Activated CD4-positive, alpha-beta T cell treated with anti-CD3 and anti-CD28 coated beads for 36 hours (primary cell): ENCODE measurements at regions of chr7 and their contacts with region 1.

Region 1: DNA sequence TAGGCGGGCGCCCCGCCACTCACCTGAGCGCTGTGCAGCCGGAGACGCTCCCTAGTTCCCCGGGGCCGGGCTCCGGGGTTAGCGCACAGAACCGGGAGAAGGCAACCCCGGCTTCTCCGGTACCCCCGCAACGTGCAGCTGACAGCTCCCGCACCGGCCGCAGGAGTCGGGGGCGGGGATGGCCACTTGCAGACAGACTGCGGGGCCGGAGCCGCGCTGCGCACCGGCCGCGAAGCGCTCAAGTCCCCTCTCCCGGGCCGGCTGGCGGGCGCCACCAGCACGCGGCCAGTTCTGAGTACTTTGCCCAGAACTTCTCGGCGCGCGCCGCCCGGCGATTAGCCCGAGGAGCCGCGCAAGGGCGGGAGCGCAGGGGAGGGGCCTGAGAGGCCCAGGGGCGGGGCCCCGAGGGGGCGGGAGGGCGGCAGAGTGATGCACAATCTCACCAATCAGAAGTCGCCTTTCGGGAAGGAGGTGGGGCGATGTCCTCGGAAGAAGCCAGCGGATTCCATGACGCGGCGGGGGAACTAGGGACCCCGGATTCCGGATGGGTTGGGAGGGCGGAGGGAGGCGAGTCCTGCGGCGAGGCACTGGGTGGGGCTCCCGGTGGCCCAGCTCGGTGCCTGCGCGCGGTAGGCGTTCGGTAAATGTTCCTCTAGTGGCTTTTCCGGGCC is at the start of gene OSBPL3:
- DNase-seq: peak; percentile 96
- ATAC-seq: peak; percentile 84
- H3K4me3 Mint-ChIP-seq: peak within 1 kb of the TSS; percentile 90
- H3K27ac Mint-ChIP-seq: peak within 1 kb of the TSS; percentile 93
- H3K4me1 Mint-ChIP-seq: peaks cover 53% of the 10 kb centered on the region
- H3K27me3 Mint-ChIP-seq: no peaks in the 10 kb centered on the region
- total RNA-seq, gene OSBPL3: 34.7 to 38.2 TPM

Region 2: DNA sequence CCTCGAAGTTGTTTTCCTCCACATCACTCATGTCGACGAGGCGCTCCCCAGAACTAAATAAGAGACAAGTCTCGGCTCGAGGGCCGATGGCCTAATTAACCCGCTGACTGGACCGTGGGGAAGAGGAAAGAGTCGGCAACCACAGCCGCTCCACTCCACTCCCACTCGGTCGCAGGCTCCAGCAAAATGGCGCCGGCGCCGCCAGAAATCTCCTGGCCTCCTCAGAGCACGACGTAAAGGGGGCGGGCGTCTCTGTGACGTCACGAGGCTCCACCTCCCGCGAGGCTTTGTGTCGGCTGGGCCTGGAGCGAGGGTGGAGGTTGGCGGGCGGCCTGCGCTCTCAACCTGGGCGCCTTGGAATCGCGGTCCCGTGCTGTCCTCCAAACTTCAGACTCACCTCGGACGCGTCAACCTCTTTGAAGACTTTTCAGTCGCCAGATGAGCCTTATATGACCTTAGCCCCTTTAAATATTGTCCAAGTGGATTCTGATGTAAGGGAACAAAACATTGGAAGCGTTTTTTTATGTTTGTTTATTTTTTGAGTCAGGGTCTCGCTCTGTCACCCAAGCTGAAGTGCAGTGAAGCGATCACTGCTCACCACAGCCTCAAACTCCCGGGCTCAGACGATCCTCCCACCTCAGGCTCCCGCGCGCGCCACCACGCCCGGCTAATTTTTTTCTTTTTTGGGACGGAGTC is 1448.1 kb before region 1 on chr7 and contains the start of gene TRA2A:
- CTCF ChIA-PET with region 1: no interaction called
- POLR2A ChIA-PET with region 1: no interaction called
- intact Hi-C with region 1: loop called in 1 of 2 experiments (anchors 5 kb)
- DNase-seq: peak; percentile 98
- ATAC-seq: peak; percentile 93
- H3K4me3 Mint-ChIP-seq: peak within 1 kb of the TSS; percentile 96
- H3K27ac Mint-ChIP-seq: peak within 1 kb of the TSS; percentile 100
- H3K4me1 Mint-ChIP-seq: peaks cover 41% of the 10 kb centered on the region
- H3K27me3 Mint-ChIP-seq: no peaks in the 10 kb centered on the region
- total RNA-seq, gene TRA2A: 86.8 to 143 TPM

Region 3: DNA sequence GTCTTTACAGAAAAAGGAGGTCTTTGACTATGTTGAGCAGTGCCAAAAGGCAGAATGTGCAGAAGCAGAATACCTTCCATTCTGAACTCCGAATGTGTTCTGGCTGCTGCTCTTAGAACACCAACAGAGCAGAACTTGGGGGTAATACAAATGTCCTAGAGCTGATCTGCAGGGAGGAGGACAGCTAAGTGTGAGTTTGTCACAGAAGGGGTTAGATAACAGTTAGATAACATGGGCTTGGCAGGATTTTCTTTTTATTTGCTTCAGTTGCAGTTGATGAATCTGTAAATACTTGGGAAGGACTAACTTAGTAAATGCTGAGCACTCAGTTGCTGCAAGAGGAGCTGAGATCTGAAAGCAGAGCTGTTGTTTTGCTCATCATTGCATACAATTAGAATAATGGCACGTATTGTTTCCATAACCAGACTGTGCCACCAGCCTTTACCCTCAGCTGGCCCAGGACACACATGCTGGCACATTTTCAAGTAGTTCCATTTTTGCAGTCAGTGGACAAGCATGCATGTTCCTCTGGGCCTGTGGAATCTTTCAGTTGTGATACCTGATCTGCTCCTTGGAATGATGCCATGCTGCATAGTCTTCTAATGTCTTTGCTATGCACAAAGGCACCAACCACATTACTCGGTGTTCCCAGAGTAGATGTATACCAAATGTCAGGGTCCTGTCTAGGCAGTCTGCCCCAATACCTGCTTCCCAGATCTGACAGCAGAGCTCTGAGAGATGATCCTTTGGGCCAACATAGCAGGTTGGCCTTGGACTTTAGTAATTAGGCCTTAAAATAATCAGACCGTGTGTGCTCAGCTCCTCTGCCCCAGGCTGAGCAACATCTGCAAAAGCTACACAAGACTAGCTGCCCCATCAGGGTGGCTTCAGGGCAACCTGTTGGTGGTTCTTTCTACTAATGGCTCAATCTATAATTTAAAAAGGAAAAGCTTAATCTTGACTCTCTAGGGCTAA is 278.4 kb before region 1 on chr7:
- CTCF ChIA-PET with region 1: no interaction called
- POLR2A ChIA-PET with region 1: no interaction called
- intact Hi-C with region 1: no loop called
- DNase-seq: no peak
- ATAC-seq: no peak
- H3K4me3 Mint-ChIP-seq: no peak overlapping the region
- H3K27ac Mint-ChIP-seq: no peak overlapping the region
- H3K4me1 Mint-ChIP-seq: no peaks in the 10 kb centered on the region
- H3K27me3 Mint-ChIP-seq: no peaks in the 10 kb centered on the region

Region 4: DNA sequence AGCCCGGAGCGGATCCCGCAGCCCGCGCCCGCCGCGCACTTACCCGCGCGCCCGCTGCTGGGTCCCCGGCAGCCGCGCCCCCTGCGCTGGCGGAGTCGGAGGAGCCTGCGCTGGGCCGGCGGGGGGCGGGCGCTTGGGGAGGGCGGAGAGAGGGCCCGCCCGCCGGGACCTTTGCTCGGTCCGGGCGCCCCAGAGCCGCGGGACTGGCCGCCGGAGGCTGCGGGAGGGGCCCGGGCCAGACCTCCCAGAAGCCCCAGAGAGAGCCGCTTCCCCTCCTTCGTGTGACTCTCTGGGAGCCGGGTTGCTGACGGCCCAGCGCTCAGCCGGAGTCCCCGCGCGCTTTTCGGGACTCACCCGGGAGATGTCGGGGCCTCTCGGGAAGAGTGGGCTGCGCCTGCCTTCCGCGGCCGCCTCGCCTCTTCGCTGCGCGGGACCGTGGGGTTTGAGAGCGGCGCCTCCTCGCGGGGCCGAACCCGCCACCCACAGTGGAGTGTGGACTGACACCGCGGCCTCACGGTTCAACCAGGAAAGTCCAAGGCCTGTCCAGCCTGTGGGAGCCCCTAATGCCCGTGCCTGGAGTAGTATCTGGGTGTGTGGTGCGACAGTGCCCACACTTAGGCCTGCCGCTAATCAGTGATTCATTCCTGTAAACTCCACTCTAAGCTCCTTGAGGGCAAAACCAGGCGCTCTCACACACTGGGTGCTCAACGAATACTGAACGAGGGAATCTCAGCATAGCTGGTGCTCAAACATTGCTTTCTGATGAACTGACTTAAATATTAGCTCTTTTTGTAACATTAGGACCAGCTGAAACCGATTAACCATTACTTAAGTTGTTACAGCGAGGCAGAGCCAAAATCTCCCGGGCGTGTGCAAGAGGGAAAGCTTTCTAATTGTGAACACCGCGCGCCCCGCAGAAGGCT is 222.4 kb before region 1 on chr7 and contains the start of gene GSDME:
- CTCF ChIA-PET with region 1: interaction called, 3 read pairs
- POLR2A ChIA-PET with region 1: no interaction called
- intact Hi-C with region 1: loop called in 1 of 2 experiments (anchors 5 kb)
- DNase-seq: peak; percentile 62
- ATAC-seq: peak; percentile 52
- H3K4me3 Mint-ChIP-seq: peak within 1 kb of the TSS; percentile 78
- H3K27ac Mint-ChIP-seq: peak within 1 kb of the TSS; percentile 85
- H3K4me1 Mint-ChIP-seq: peaks cover 33% of the 10 kb centered on the region
- H3K27me3 Mint-ChIP-seq: peaks cover 39% of the 10 kb centered on the region
- total RNA-seq, gene GSDME: 6.2 to 8.5 TPM

Region 5: GRCh38 chr7:24869572-24869971 is 110.4 kb before region 1 on chr7:
- CTCF ChIA-PET with region 1: no interaction called
- POLR2A ChIA-PET with region 1: no interaction called
- intact Hi-C with region 1: loop called (anchors 1 kb)
- DNase-seq: no peak
- ATAC-seq: no peak
- H3K4me3 Mint-ChIP-seq: no peak overlapping the region
- H3K27ac Mint-ChIP-seq: no peak overlapping the region
- H3K4me1 Mint-ChIP-seq: peaks cover 41% of the 10 kb centered on the region
- H3K27me3 Mint-ChIP-seq: no peaks in the 10 kb centered on the region

Region 6: GRCh38 chr7:24965831-24966709 is 13.9 kb before region 1 on chr7:
- CTCF ChIA-PET with region 1: interaction called, 6 read pairs
- POLR2A ChIA-PET with region 1: no interaction called
- intact Hi-C with region 1: loop called (anchors 1 kb)
- DNase-seq: peak; percentile 51
- ATAC-seq: peak; percentile 86
- H3K4me3 Mint-ChIP-seq: no peak overlapping the region
- H3K27ac Mint-ChIP-seq: peak overlapping the region; percentile 70
- H3K4me1 Mint-ChIP-seq: peaks cover 81% of the 10 kb centered on the region
- H3K27me3 Mint-ChIP-seq: no peaks in the 10 kb centered on the region

Region 7: GRCh38 chr7:25069900-25070443 is 90.0 kb after region 1 on chr7:
- CTCF ChIA-PET with region 1: interaction called, 6 read pairs
- POLR2A ChIA-PET with region 1: no interaction called
- intact Hi-C with region 1: loop called (anchors 1 to 2 kb)
- DNase-seq: peak; percentile 66
- ATAC-seq: peak; percentile 53
- H3K4me3 Mint-ChIP-seq: no peak overlapping the region
- H3K27ac Mint-ChIP-seq: no peak overlapping the region
- H3K4me1 Mint-ChIP-seq: peaks cover 12% of the 10 kb centered on the region
- H3K27me3 Mint-ChIP-seq: no peaks in the 10 kb centered on the region

Region 8: DNA sequence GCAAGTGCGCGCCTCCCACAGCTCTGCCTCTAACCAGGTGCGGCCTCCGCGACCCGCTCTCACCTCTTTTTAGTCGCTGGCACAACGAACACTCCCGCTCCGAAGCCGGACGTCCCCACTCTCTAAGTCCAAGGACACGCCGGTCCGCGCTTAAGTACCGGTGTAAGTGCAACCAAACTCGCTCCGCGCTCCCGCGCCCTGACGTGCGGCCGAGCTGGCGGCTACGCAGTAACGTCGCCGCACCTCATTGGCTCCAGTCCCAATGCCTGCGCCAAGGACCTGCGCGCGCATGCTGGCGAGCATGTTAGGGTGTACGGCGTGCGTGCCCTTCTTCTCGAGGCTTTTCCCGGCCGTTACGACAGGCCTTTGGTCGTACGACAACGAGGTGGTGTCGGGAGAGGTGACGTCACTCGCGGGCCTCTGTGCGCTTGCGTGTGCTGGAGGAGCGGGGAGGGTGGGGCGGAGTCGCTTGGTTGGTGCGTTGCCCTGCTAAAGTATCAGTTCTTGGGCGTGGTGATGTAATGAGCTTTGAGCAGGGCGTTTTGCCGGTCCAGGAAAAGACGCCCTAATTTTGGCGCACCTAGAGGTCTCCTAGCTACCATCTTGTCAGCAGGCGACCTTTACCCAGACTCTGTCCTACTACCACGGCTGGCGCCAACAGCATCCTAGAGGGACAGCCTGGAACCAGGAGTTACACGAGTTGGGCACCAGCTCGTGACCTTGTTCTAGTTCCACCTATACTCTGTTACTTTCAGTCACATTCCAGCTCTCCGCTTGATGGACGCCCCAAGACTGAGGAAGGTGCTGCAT is 145.3 kb after region 1 on chr7 and contains the start of gene CYCS:
- CTCF ChIA-PET with region 1: no interaction called
- POLR2A ChIA-PET with region 1: interaction called, 8 read pairs
- intact Hi-C with region 1: loop called in 1 of 2 experiments (anchors 1 kb)
- DNase-seq: peak; percentile 100
- ATAC-seq: peak; percentile 97
- H3K4me3 Mint-ChIP-seq: peak within 1 kb of the TSS; percentile 97
- H3K27ac Mint-ChIP-seq: peak within 1 kb of the TSS; percentile 98
- H3K4me1 Mint-ChIP-seq: peaks cover 27% of the 10 kb centered on the region
- H3K27me3 Mint-ChIP-seq: no peaks in the 10 kb centered on the region
- total RNA-seq, gene CYCS: 222 to 237 TPM